Mucosa of descending colon (tissue), 3 donors: ENCODE measurements at regions of chr5 and their contacts with region 1.

Region 1: DNA sequence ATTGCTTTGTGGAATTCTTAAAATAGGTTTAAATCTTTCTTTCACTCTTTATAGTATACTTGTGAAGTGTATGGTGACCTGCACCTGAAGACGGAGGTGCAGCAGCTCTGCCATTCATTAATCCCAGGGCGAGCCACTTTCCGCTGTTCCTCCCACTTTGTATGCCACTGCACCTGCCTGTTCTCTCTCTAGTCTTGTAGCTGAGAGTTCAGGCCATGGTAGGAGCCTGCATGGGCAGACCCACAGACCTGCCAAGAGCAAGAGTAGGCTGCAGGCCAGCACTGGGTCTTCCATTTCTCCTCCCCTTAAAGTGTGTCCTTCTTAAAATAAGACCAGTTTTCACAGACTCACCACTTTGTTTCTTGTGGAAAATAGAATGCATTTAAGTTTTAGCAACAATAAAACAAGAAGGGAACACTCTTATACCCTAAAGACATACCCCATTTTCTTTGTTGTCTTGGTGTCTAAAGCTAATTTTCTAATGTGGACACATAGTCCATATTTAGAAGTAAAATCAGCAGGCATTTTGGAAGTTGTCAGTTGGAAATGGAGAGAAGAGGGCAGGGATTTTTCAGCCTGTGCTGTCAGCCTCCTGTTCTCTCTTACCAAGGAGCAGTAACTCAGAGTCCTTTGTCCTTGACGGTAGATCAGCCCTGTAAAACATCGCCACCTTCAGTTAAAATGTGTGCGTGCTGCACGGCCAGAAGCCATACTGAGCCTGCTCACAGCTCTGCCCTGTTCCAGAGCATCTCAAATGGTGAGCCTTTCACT is 103.2 kb downstream of the SNCAIP start:
- DNase-seq: peak in 2 of 3 donors; percentile 62 to 71
- ATAC-seq: peak; percentile 95
- H3K4me3 ChIP-seq: no peak overlapping the region
- H3K4me1 ChIP-seq: peaks cover under 1% of the 10 kb centered on the region
- CTCF ChIP-seq: no peak

Region 2: GRCh38 chr5:122300374-122300773 is 114.8 kb before region 1 on chr5:
- intact Hi-C with region 1: loop called in 1 of 2 experiments (anchors 10 kb)
- DNase-seq: no peak
- ATAC-seq: no peak
- H3K4me3 ChIP-seq: no peak overlapping the region
- H3K4me1 ChIP-seq: no peaks in the 10 kb centered on the region
- CTCF ChIP-seq: no peak